Common myeloid progenitor, CD34-positive (primary cell): ENCODE measurements at regions of chr9 and their contacts with region 1.

Region 1: DNA sequence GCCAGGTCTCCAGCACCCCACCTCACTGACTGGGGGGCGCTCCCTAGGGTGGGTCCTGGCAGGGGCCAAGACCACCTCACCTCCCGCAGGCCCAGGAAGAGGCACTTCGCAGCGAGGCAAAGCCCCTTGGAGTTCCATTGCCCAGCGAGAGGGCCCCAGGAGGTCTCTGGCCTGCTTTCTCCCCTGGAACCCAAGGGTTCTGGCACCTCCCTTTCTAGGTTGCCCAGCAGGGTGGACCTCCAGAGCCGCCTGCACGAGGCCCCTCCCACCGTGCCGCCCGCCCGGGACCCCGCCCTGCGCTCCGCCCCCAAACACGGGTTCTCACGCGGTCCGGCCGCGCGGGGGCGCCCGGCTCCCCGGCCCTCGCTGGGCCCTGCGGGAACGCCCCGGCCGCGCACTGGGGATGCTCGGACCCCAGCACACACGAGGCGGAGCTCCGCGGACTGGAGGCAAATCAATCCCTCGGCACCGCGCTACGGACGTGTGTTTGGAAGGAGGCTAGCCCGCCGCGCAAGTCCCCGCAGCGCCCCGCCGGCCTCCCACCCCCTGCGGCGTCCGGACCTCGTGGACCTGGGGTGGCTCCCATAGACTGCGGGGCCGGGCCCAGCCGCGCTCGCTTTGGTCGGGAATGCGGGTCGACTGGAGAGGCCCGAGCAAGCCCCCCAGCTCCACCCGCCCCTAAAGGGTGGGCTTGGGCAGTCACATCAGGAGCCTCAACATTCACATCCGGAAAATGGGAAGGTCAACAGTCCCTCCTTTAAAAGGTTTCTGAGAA is 99.5 kb upstream of the LMX1B start:
- DNase-seq: peak in 2 of 3 donors; percentile 59 to 65
- H3K4me3 ChIP-seq: peak overlapping the region in 3 of 7 experiments; percentile 22 to 64 (median 43)
- H3K27ac ChIP-seq: no peak overlapping the region
- H3K4me1 ChIP-seq: peaks cover 0 to 21% (median 16%) of the 10 kb centered on the region in 4 experiments
- H3K27me3 ChIP-seq: peaks cover 2 to 30% (median 16%) of the 10 kb centered on the region in 5 experiments

Region 2: GRCh38 chr9:126357074-126357473 is 157.2 kb before region 1 on chr9:
- CTCF ChIA-PET with region 1: no interaction called
- POLR2A ChIA-PET with region 1: no interaction called
- DNase-seq: no peak
- H3K4me3 ChIP-seq: no peak overlapping the region
- H3K27ac ChIP-seq: no peak overlapping the region
- H3K4me1 ChIP-seq: peaks cover 0 to 11% (median under 1%) of the 10 kb centered on the region in 4 experiments
- H3K27me3 ChIP-seq: no peaks in the 10 kb centered on the region

Region 3: DNA sequence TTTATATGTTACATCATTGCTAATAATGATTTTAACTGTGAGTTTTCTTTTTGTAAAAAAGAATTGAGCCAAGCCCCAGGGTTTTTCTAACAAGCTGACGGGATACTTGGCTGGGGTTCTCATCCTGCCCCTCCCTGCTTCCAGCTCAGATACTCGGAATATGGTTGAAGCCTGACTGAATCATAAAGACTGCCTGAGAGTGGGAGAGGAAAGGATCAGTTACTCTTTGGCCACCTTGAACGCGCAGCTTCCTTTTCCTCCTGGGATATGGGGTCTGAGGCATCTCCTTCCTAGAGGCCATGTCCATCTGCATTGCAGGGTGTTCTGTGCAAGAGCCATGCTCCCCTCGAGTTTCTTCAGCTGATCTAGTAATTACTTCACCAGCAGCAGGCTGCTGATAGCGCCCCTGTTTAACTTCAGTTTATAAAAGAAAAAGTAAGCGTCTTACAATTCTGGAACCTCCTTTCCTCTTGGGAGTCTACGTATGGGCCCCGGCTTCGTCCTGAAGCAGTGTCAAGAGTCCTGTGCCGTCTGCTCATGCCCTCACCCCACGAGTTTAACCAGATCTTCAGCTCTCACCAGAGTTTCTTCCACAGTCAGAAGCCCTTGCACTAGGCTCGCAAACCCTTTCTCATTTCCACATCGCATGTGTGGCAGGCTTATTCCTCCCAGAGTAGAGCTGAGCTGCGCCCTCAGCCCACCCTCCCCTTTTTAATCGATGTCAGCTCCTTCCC is 57.6 kb before region 1 on chr9:
- CTCF ChIA-PET with region 1: no interaction called
- POLR2A ChIA-PET with region 1: no interaction called
- DNase-seq: no peak
- H3K4me3 ChIP-seq: no peak overlapping the region
- H3K27ac ChIP-seq: no peak overlapping the region
- H3K4me1 ChIP-seq: no peaks in the 10 kb centered on the region
- H3K27me3 ChIP-seq: no peaks in the 10 kb centered on the region

Region 4: GRCh38 chr9:126550891-126551351 is 36.7 kb after region 1 on chr9:
- CTCF ChIA-PET with region 1: interaction called, 61 read pairs
- POLR2A ChIA-PET with region 1: interaction called, 3 read pairs
- DNase-seq: no peak
- H3K4me3 ChIP-seq: no peak overlapping the region
- H3K27ac ChIP-seq: no peak overlapping the region
- H3K4me1 ChIP-seq: no peaks in the 10 kb centered on the region
- H3K27me3 ChIP-seq: no peaks in the 10 kb centered on the region

Region 5: GRCh38 chr9:126673689-126674364 is 159.6 kb after region 1 on chr9:
- CTCF ChIA-PET with region 1: no interaction called
- POLR2A ChIA-PET with region 1: no interaction called
- DNase-seq: peak; percentile 25 to 53 (median 39)
- H3K4me3 ChIP-seq: no peak overlapping the region
- H3K27ac ChIP-seq: no peak overlapping the region
- H3K4me1 ChIP-seq: peaks cover 0 to 6% (median 2%) of the 10 kb centered on the region in 4 experiments
- H3K27me3 ChIP-seq: peaks cover 8 to 97% (median 45%) of the 10 kb centered on the region in 5 experiments

Region 6: DNA sequence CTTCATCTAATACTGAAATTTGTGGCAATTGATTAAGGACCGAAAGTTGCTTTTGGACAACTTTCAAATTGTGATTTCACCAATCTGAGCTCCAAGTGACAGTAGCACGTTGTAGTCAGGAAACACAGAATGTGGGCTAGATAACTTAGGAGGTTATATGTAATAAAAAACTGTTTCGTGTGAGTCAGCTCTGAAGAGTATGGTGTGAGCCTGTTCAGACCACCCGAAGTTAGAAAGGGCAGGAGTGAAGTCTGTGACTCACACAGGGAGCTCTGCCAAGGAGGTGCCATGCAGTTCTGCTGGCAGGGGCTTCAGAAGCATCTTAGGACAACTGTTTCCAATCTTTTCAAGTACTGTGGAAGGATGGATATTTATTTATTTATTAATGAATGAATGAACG is 329.9 kb after region 1 on chr9:
- CTCF ChIA-PET with region 1: no interaction called
- POLR2A ChIA-PET with region 1: no interaction called
- DNase-seq: peak in 2 of 3 donors; percentile 69 to 76
- H3K4me3 ChIP-seq: no peak overlapping the region
- H3K27ac ChIP-seq: no peak overlapping the region
- H3K4me1 ChIP-seq: peaks cover 0 to 14% (median 10%) of the 10 kb centered on the region in 4 experiments
- H3K27me3 ChIP-seq: no peaks in the 10 kb centered on the region